Aorta (tissue), 5 donors: ENCODE measurements at regions of chr16 and their contacts with region 1.

Region 1: DNA sequence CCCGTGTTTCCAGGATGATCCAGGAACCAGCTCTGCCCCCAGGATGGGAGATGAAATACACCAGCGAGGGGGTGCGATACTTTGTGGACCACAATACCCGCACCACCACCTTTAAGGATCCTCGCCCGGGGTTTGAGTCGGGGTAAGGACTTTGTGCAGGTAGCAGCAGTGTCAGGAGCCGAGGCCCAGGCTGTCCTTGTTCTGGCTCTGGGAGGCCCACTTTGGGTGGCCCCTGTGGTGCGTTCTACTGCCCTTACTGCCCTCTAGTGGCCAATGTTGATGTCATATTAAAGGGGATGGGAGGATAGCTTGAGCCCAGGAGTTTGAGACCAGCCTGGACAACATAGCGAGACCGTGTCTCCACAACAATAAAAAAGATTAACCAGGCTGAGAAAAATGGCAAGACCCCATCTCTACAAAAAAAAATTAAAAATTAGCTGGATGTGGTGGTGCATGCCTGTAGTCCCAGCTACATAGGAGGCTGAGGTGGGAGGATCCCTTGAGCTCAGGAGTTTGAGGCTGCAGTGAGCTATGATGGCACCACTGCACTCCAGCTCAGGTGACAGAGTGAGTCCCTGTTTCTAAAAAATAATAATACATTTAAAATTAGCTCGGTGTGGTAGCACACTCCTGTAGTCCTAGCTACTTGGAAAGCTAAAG is 20.9 kb upstream of the CLEC18A start:
- DNase-seq: peak; percentile 71 to 82
- ATAC-seq: peak; percentile 69
- H3K4me3 ChIP-seq: no peak overlapping the region
- H3K27ac ChIP-seq: peak overlapping the region in 1 of 2 donors; percentile 78
- H3K4me1 ChIP-seq: no peaks in the 10 kb centered on the region
- H3K27me3 ChIP-seq: no peaks in the 10 kb centered on the region

Region 2: GRCh38 chr16:69796351-69797118 is 133.7 kb before region 1 on chr16:
- intact Hi-C with region 1: loop called (anchors 1 kb)
- DNase-seq: no peak
- ATAC-seq: peak; percentile 90
- H3K4me3 ChIP-seq: no peak overlapping the region
- H3K27ac ChIP-seq: no peak overlapping the region
- H3K4me1 ChIP-seq: no peaks in the 10 kb centered on the region
- H3K27me3 ChIP-seq: no peaks in the 10 kb centered on the region

Region 3: GRCh38 chr16:69917739-69918138 is 12.5 kb before region 1 on chr16:
- intact Hi-C with region 1: no loop called
- DNase-seq: peak; percentile 84 to 90
- ATAC-seq: peak; percentile 72
- H3K4me3 ChIP-seq: no peak overlapping the region
- H3K27ac ChIP-seq: peak overlapping the region; percentile 60 to 80
- H3K4me1 ChIP-seq: peaks cover 2 to 9% of the 10 kb centered on the region in 2 donors
- H3K27me3 ChIP-seq: no peaks in the 10 kb centered on the region